Activated CD4-positive, alpha-beta T cell treated with anti-CD3 and anti-CD28 coated beads for 36 hours (primary cell): ENCODE measurements at regions of chr12 and their contacts with region 1.

Region 1: DNA sequence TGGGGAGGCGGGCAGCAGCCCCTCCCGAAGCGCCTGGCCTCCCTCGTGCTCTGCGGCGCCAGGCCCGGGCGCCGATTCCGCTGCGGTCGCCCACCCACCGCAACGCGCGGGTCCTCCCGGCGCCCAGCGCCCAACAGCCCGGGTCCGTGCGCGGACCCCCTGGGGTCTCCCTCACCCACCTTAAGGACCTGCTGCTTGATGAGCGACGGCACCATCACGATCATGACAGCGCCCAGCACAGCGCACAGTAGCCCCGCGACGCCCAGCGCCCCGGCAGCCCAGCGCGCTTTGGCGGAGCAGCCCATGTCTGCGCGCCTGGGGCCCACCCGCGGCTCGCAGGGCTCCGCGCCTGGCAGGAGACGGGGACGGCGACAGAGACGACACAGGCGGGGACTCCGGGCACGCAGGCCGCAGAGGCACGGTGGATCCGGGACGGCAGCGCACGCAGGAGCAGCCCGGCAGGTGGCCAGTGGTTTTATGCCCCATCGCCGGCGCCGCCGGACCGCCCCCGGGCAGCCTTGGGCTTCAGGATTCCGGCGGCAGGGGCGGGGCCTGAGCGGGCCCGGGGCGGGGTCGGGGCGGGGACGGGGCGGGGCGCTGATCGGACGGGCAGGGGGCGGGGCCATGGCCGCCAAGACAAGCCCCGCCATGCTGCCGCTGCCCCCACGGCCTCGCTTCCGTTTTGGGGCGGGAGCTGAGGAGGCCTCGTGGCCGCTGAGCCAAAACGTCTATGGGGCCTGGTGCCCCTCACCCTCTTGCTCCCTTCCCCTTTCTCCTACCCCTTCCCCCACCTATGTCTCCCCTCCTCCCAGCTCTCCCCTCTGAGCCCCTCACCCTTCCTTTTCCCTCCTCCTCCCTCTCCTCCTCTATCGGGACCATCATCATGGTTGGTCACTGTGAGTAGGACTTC is at the start of gene SCARB1:
- DNase-seq: peak; percentile 91
- ATAC-seq: peak; percentile 91
- H3K4me3 Mint-ChIP-seq: peak within 1 kb of the TSS; percentile 76
- H3K27ac Mint-ChIP-seq: peak within 1 kb of the TSS; percentile 89
- H3K4me1 Mint-ChIP-seq: peaks cover 21% of the 10 kb centered on the region
- H3K27me3 Mint-ChIP-seq: peaks cover 3% of the 10 kb centered on the region
- total RNA-seq, gene SCARB1: 22.9 to 24.1 TPM

Region 2: GRCh38 chr12:124567661-124568373 is 295.9 kb before region 1 on chr12:
- CTCF ChIA-PET with region 1: no interaction called
- POLR2A ChIA-PET with region 1: no interaction called
- intact Hi-C with region 1: loop called in 1 of 2 experiments (anchors 5 kb)
- DNase-seq: peak; percentile 89
- ATAC-seq: peak; percentile 72
- H3K4me3 Mint-ChIP-seq: peak overlapping the region; percentile 75
- H3K27ac Mint-ChIP-seq: peak overlapping the region; percentile 89
- H3K4me1 Mint-ChIP-seq: peaks cover 33% of the 10 kb centered on the region
- H3K27me3 Mint-ChIP-seq: no peaks in the 10 kb centered on the region

Region 3: DNA sequence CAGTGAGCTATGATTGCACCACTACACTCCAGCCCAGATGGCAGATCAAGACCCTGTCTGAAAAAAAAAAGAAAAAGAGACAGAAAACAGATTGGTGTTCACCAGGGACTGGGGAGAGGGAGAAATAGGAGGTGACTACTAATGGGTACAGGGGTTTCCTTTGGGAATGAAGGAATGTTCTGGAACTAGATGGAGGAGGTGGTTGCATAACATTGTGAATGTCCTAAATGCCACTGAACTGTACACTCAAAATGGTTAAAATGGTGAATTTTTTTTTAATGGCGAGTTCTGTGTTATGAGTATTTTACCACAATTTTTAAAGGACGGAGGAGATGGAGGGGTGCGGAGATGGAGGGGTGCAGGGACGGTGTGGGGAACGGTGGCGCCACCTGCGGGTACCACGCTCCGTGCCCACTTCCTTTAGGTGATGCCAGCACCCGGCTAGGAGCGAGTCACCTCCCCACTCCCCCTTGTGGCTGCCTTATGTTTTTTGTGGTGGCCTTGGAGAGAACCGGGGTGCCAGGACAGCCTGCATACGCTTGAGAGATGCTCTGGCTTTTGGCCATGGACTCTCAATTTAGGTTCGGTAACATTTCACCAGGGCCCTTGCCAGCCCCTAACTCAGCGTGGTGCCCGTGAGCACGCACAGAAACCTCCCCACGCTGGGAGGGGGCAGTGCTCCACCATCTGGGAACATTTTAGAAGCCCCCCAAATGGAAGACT is 34.7 kb after region 1 on chr12:
- CTCF ChIA-PET with region 1: no interaction called
- POLR2A ChIA-PET with region 1: no interaction called
- intact Hi-C with region 1: loop called in 1 of 2 experiments (anchors 2 kb)
- DNase-seq: peak; percentile 89
- ATAC-seq: peak; percentile 94
- H3K4me3 Mint-ChIP-seq: no peak overlapping the region
- H3K27ac Mint-ChIP-seq: no peak overlapping the region
- H3K4me1 Mint-ChIP-seq: peaks cover 16% of the 10 kb centered on the region
- H3K27me3 Mint-ChIP-seq: no peaks in the 10 kb centered on the region

Region 4: GRCh38 chr12:124906606-124907261 is 43.1 kb after region 1 on chr12:
- CTCF ChIA-PET with region 1: interaction called, 3 read pairs
- POLR2A ChIA-PET with region 1: no interaction called
- intact Hi-C with region 1: loop called in 1 of 2 experiments (anchors 2 kb)
- DNase-seq: peak; percentile 93
- ATAC-seq: peak; percentile 88
- H3K4me3 Mint-ChIP-seq: no peak overlapping the region
- H3K27ac Mint-ChIP-seq: peak overlapping the region; percentile 28
- H3K4me1 Mint-ChIP-seq: peaks cover 25% of the 10 kb centered on the region
- H3K27me3 Mint-ChIP-seq: no peaks in the 10 kb centered on the region

Region 5: GRCh38 chr12:124940549-124941527 is 77.2 kb after region 1 on chr12:
- CTCF ChIA-PET with region 1: interaction called, 3 read pairs
- POLR2A ChIA-PET with region 1: no interaction called
- intact Hi-C with region 1: loop called in 1 of 2 experiments (anchors 1 kb)
- DNase-seq: peak; percentile 95
- ATAC-seq: peak; percentile 39
- H3K4me3 Mint-ChIP-seq: no peak overlapping the region
- H3K27ac Mint-ChIP-seq: no peak overlapping the region
- H3K4me1 Mint-ChIP-seq: peaks cover 11% of the 10 kb centered on the region
- H3K27me3 Mint-ChIP-seq: no peaks in the 10 kb centered on the region

Region 6: DNA sequence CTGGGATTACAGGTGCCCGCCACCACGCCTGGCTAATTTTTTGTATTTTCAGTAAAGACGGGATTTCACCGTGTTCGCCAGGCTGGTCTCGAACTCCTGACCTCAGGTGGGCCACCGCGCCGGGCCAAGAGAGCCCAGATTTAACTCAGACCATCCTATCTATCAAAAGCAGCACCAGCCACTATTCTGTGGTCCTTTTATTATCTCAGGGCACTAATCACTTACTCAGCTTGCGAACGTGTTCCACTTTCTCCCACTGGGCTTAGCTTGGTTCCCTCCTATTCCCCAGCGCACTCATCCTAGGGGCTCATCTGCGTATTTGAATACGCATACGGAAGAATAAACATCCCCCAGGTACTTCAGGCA is 185.4 kb after region 1 on chr12:
- CTCF ChIA-PET with region 1: no interaction called
- POLR2A ChIA-PET with region 1: no interaction called
- intact Hi-C with region 1: loop called in 1 of 2 experiments (anchors 1 kb)
- DNase-seq: no peak
- ATAC-seq: no peak
- H3K4me3 Mint-ChIP-seq: peak overlapping the region; percentile 75
- H3K27ac Mint-ChIP-seq: no peak overlapping the region
- H3K4me1 Mint-ChIP-seq: peaks cover 8% of the 10 kb centered on the region
- H3K27me3 Mint-ChIP-seq: no peaks in the 10 kb centered on the region